Ascending aorta (tissue), 2 donors: ENCODE measurements at regions of chr1 and their contacts with region 1.

Region 1: GRCh38 chr1:12596007-12596821 is 21.8 kb downstream of the DHRS3 start:
- DNase-seq: peak; percentile 93 to 96
- H3K4me3 ChIP-seq: peak overlapping the region; percentile 52 to 63
- H3K27ac ChIP-seq: peak overlapping the region; percentile 96
- H3K4me1 ChIP-seq: peaks cover 43 to 70% of the 10 kb centered on the region in 2 donors
- H3K27me3 ChIP-seq: no peaks in the 10 kb centered on the region
- CTCF ChIP-seq: no peak

Region 2: DNA sequence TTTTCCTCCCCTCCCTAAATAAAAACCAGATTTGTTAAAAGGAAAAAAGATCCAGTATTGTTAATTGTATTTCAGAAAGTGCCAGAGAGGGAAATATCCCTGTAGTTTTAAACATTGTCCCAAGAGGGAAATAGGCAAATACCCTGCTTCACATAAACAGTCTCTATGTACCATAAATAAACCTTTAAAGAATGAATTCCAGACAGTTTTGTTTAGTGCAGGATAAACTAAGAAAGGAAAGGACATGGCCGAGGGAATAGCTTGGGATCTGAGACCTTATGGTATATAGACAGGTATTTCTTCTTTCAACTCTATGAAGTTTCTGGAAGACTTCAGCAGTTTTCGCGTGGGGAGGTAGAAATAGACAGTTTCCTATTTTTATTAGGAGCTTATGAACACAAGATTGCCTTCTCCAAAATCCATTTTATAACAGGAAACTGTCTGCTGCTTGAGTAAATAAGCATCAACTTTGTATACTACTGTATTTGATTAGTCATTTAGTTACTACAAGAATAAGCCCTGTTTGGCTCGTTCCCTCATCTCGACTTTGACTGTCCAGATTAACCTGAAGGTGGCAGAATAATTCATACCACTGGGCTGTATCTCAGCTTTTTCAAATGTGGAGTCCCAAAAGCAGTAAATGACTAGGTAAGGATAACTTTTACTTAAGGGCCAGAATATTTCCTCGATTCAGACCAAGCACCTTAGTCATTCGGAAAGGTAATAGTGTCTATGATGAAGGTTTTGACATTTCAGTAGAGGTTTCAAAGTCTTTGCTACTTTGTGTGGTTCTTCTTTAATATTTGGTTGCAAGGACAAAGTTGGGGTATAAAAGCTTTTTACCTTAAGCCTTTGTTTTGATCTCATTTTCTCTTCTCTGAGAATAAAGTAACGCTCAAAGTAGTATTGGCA is 188.9 kb before region 1 on chr1:
- intact Hi-C with region 1: loop called (anchors 5 kb)
- DNase-seq: no peak
- H3K4me3 ChIP-seq: no peak overlapping the region
- H3K27ac ChIP-seq: peak overlapping the region; percentile 75 to 83
- H3K4me1 ChIP-seq: peaks cover 19 to 51% of the 10 kb centered on the region in 2 donors
- H3K27me3 ChIP-seq: no peaks in the 10 kb centered on the region
- CTCF ChIP-seq: peak; percentile 40 to 52 (median 49)

Region 3: GRCh38 chr1:12454406-12455391 is 141.5 kb before region 1 on chr1:
- intact Hi-C with region 1: loop called (anchors 5 kb)
- DNase-seq: peak in 1 of 2 donors; percentile 86
- H3K4me3 ChIP-seq: no peak overlapping the region
- H3K27ac ChIP-seq: peak overlapping the region; percentile 89 to 92
- H3K4me1 ChIP-seq: peaks cover 49 to 87% of the 10 kb centered on the region in 2 donors
- H3K27me3 ChIP-seq: no peaks in the 10 kb centered on the region
- CTCF ChIP-seq: no peak

Region 4: DNA sequence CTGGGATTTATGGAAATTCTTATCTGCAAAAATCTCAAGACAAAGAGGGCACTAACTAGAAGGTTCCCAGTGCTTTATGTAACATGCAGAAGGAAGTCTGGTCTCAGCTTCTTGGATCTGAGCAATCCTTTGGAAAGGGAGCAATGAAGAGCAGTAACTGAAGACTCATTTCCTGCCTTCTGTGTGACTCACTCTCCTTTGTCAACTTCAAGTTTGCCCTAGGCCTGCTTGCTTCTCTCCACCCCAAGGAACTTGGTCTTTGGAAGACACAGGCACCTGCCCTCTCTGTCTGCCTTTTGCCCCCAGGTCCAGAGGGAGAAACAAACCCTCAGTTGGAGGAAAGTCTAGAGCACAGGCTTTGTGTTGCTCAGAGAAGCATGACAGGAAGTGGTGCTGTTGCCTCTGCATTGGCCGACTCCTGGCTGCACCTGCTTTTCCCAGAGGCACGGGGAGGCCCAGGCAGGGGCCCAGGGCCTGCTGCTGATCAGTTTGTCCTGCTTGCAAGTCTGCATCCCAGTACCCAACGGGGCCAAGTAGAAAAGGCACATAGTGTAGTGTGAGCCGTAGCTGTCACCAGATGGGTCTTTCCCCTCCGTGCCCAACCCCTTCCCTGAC is 115.4 kb before region 1 on chr1:
- intact Hi-C with region 1: no loop called
- DNase-seq: peak in 1 of 2 donors; percentile 79
- H3K4me3 ChIP-seq: no peak overlapping the region
- H3K27ac ChIP-seq: peak overlapping the region; percentile 72 to 88
- H3K4me1 ChIP-seq: peaks cover 30 to 56% of the 10 kb centered on the region in 2 donors
- H3K27me3 ChIP-seq: no peaks in the 10 kb centered on the region
- CTCF ChIP-seq: no peak

Region 5: GRCh38 chr1:12539705-12540579 is 56.3 kb before region 1 on chr1:
- intact Hi-C with region 1: loop called (anchors 2 kb)
- DNase-seq: peak; percentile 77 to 95
- H3K4me3 ChIP-seq: no peak overlapping the region
- H3K27ac ChIP-seq: peak overlapping the region; percentile 74 to 84
- H3K4me1 ChIP-seq: peaks cover 10 to 19% of the 10 kb centered on the region in 2 donors
- H3K27me3 ChIP-seq: no peaks in the 10 kb centered on the region
- CTCF ChIP-seq: peak in 1 of 3 experiments; percentile 21

Region 6: DNA sequence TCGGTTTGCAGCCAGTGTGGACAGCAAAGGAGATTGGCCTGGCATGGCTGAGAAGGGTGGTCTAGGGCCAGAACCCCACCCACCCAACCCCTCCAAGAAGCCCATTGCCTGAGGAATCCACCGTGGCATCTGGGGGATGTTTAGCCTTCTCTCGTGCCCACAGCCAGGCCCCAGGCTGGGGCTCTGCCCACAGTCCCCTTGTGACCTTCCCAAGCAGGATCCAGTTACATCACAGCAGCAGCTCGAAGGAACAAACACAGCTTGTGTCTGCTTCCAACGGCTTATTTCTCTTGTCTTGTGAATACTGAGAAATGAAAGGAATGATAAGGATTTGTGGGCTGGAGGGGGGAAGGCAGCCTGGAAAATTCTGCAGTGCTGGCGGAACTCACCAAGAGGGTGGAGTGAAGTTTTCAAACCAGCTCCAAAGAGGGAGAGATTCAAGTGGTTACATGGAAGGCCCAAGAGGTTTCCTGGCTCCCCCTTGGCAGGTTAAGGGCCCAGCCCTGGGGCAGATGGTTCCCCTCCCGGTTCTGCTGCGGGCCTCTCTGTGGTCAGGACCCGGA is 39.8 kb before region 1 on chr1:
- intact Hi-C with region 1: loop called (anchors 2 kb)
- DNase-seq: peak in 1 of 2 donors; percentile 83
- H3K4me3 ChIP-seq: no peak overlapping the region
- H3K27ac ChIP-seq: peak overlapping the region; percentile 85 to 91
- H3K4me1 ChIP-seq: peaks cover 16 to 46% of the 10 kb centered on the region in 2 donors
- H3K27me3 ChIP-seq: no peaks in the 10 kb centered on the region
- CTCF ChIP-seq: no peak